Activated T-helper 2 cell treated with anti-CD3 and anti-CD28 coated beads, Interferon-gamma antibody, Interleukin-2, Interleukin-4, amounts not matched to agents 10 μg/mL and 5 μg/mL and 100 μg/mL, durations not matched to agents 14 hours and 24 hours and 36 hours (primary cell): ENCODE measurements at regions of chr3 and their contacts with region 1.

Region 1: GRCh38 chr3:38164966-38165680 is at the start of gene OXSR1:
- DNase-seq: peak; percentile 96
- H3K4me3 Mint-ChIP-seq: peak within 1 kb of the TSS; percentile 93
- H3K27ac Mint-ChIP-seq: peak within 1 kb of the TSS; percentile 99
- H3K4me1 Mint-ChIP-seq: peaks cover 44% of the 10 kb centered on the region
- H3K27me3 Mint-ChIP-seq: no peaks in the 10 kb centered on the region
- total RNA-seq, gene OXSR1: 62.2 and 65.8 TPM in 2 replicates

Region 2: DNA sequence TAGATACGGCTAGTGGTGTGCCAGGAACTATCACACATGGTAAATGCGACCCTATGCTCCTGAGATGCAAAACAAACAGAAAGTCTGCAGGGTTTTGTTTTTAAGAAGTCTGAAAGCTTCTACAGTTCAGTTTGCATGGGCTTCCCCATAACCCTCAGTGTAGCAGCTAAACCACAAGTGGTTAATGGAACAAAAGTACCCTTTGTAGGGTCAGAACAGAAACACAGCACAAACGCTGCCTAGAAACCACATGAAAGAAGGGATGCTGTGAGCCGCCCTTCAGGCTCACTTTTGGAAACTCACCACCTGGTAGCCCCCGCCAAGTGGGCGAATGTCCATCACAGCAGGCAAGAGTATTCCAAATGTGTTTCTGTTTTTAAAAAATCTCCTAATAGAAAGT is 257.2 kb before region 1 on chr3:
- intact Hi-C with region 1: loop called (anchors 10 kb)
- DNase-seq: peak; percentile 46
- H3K4me3 Mint-ChIP-seq: peak overlapping the region; percentile 24
- H3K27ac Mint-ChIP-seq: peak overlapping the region; percentile 85
- H3K4me1 Mint-ChIP-seq: peaks cover 54% of the 10 kb centered on the region
- H3K27me3 Mint-ChIP-seq: peaks cover 3% of the 10 kb centered on the region

Region 3: DNA sequence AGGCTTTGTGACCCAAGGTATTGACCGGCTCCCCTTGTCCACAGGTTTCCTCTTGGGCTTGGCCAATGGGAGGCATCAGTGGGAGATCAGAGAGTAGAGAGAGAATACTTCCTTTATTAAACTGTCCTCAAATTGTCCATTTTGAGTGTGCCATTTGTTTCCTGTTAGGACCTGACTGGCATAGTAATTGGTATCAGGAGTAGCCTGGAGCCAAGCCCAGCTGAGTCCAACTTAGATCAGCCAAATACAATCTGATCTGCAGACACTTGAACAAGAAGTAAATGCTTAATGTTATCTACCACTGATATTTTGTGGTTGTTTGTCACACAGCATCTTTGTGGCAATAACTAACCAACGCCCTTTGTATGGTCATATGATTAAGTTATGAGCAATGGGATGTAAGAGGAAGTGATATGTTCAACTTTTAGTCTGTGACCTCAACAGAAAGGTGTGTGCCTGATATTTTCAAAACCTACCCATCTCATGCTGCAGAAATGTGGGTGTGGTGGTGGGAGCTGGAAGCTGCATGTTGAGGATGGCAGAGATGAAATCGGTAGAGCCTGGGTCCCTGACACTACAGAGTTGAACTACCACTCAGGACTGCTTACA is 13.4 kb before region 1 on chr3:
- intact Hi-C with region 1: loop called (anchors 1 kb)
- DNase-seq: no peak
- H3K4me3 Mint-ChIP-seq: no peak overlapping the region
- H3K27ac Mint-ChIP-seq: peak overlapping the region; percentile 51
- H3K4me1 Mint-ChIP-seq: peaks cover 40% of the 10 kb centered on the region
- H3K27me3 Mint-ChIP-seq: no peaks in the 10 kb centered on the region

Region 4: DNA sequence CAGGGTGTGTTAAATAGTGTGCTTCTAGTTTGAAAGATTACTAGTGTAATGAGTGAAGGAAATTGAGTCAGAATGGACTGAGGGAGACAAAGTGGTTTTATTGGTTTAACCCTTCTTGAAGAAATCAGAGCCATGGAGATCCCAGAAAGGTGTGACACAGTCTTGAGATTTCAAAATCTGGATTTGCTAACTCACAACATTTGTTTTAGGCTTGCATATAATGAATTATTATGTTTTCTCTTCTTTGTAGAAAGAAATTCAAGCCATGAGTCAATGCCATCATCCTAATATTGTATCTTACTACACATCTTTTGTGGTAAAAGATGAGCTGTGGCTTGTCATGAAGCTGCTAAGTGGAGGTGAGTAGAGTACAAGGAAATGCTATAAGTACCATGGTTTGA is 25.4 kb after region 1 on chr3:
- intact Hi-C with region 1: loop called (anchors 2 kb)
- DNase-seq: no peak
- H3K4me3 Mint-ChIP-seq: no peak overlapping the region
- H3K27ac Mint-ChIP-seq: peak overlapping the region; percentile 21
- H3K4me1 Mint-ChIP-seq: peaks cover 11% of the 10 kb centered on the region
- H3K27me3 Mint-ChIP-seq: no peaks in the 10 kb centered on the region

Region 5: GRCh38 chr3:38205472-38205805 is 40.3 kb after region 1 on chr3:
- intact Hi-C with region 1: loop called (anchors 2 kb)
- DNase-seq: peak; percentile 16
- H3K4me3 Mint-ChIP-seq: peak overlapping the region; percentile 14
- H3K27ac Mint-ChIP-seq: peak overlapping the region; percentile 80
- H3K4me1 Mint-ChIP-seq: peaks cover 62% of the 10 kb centered on the region
- H3K27me3 Mint-ChIP-seq: no peaks in the 10 kb centered on the region

Region 6: DNA sequence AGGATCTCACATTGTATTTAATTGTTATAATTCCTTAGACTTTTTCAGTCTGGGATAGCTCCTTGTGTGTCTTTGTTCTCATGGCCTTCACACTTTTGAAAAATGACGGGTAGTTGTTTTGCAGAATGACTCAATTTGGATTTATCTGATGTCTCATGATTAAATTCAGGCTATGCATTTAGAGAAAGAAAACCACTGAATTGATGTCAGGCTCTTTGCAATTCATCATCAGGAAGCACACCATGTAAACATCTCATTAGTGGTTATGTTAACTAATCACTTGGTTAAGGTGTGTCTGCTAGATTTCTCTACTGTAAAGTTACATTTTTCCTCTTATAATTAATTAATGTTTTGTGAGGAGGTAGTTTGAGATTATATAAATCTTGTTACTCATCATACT is 92.5 kb after region 1 on chr3:
- intact Hi-C with region 1: loop called (anchors 5 kb)
- DNase-seq: no peak
- H3K4me3 Mint-ChIP-seq: no peak overlapping the region
- H3K27ac Mint-ChIP-seq: no peak overlapping the region
- H3K4me1 Mint-ChIP-seq: peaks cover 36% of the 10 kb centered on the region
- H3K27me3 Mint-ChIP-seq: no peaks in the 10 kb centered on the region

Region 7: DNA sequence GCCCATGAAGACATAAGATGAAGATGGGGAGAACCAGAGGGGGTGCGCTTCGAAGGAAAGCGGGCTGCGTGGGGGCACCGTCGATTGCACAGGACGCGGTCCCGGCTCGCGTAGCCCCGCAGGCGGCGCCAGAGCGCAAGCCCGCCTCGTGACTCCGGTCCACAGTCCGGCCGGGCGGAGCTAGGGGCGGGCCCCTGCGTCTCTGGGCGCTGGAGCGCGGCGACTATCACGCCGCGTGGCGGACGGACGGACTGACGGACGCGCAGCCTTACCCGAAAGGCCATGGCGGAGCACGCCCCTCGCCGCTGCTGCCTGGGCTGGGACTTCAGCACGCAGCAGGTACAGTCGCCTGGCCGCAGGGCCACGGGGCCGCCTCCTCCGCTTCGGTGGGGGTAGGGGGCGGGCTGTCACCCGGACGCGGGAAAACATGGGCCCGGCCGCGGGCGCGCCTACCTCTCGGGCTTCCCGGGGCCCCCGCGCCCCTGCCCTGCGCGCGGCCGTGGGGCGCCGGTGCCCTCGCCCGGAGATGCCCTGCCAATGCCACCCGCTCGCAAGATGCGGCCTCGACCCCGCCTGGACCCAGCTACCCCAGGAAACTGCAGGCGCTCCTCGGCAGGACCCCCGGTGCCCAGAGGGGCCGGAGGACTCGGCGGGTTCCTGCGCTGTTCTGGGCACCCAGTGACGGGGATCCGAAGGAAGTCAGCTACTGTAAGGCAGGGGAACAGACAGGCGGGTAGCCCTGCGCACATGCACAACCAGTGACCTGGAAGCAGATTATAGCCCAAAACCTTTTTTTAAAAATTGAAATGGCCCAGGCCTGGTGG is 181.7 kb after region 1 on chr3 and contains the start of gene XYLB:
- intact Hi-C with region 1: loop called (anchors 2 kb)
- DNase-seq: peak; percentile 76
- H3K4me3 Mint-ChIP-seq: peak within 1 kb of the TSS; percentile 78
- H3K27ac Mint-ChIP-seq: peak within 1 kb of the TSS; percentile 66
- H3K4me1 Mint-ChIP-seq: peaks cover 8% of the 10 kb centered on the region
- H3K27me3 Mint-ChIP-seq: peaks cover 3% of the 10 kb centered on the region
- total RNA-seq, gene XYLB: 8.6 and 11.8 TPM in 2 replicates

Region 8: GRCh38 chr3:38843898-38844297 is 678.8 kb after region 1 on chr3:
- intact Hi-C with region 1: no loop called
- DNase-seq: no peak
- H3K4me3 Mint-ChIP-seq: no peak overlapping the region
- H3K27ac Mint-ChIP-seq: no peak overlapping the region
- H3K4me1 Mint-ChIP-seq: no peaks in the 10 kb centered on the region
- H3K27me3 Mint-ChIP-seq: peaks cover 27% of the 10 kb centered on the region